ENCODE measurements at regions of chr5 and their contacts with region 1.

Region 1: DNA sequence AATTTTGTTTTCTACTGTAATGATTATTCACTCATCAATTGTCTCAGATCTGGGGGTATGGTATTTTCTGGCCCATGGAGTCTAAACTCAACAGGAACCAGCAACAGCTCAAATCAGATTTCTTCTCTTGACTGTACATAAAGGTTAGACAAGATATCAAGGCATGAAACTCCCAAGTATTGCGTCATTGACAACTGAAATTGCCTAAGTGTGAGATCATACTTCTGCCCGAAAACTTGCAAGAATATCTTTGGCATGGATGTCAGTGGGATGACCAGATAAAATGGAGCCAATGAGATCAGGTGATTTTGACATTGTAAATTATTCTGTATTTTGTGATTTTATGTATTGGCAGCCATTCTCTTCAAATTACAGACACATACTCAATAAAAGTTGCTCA is 141.7 kb upstream of the STK32A start:
- DNase-seq: no peak
- ATAC-seq: no peak
- H3K4me3 Mint-ChIP-seq: no peak overlapping the region
- H3K27ac Mint-ChIP-seq: no peak overlapping the region
- H3K4me1 Mint-ChIP-seq: no peaks in the 10 kb centered on the region
- H3K27me3 Mint-ChIP-seq: no peaks in the 10 kb centered on the region
- CTCF ChIP-seq: no peak

Region 2: GRCh38 chr5:147148715-147149114 is 55.6 kb after region 1 on chr5:
- CTCF ChIA-PET with region 1: no interaction called
- POLR2A ChIA-PET with region 1: no interaction called
- intact Hi-C with region 1: no loop called
- DNase-seq: no peak
- ATAC-seq: no peak
- H3K4me3 Mint-ChIP-seq: no peak overlapping the region
- H3K27ac Mint-ChIP-seq: no peak overlapping the region
- H3K4me1 Mint-ChIP-seq: no peaks in the 10 kb centered on the region
- H3K27me3 Mint-ChIP-seq: no peaks in the 10 kb centered on the region
- CTCF ChIP-seq: no peak

Region 3: GRCh38 chr5:147849226-147849625 is 756.1 kb after region 1 on chr5:
- CTCF ChIA-PET with region 1: no interaction called
- POLR2A ChIA-PET with region 1: no interaction called
- intact Hi-C with region 1: loop called (anchors 5 kb)
- DNase-seq: no peak
- ATAC-seq: no peak
- H3K4me3 Mint-ChIP-seq: no peak overlapping the region
- H3K27ac Mint-ChIP-seq: no peak overlapping the region
- H3K4me1 Mint-ChIP-seq: no peaks in the 10 kb centered on the region
- H3K27me3 Mint-ChIP-seq: peaks cover 9% of the 10 kb centered on the region
- CTCF ChIP-seq: no peak